PC-3 (cell line): ENCODE measurements at regions of chr1 and their contacts with region 1.

Region 1: GRCh38 chr1:32063261-32063681 is 9.5 kb upstream of the TMEM39B start:
- DNase-seq: peak; percentile 63
- ATAC-seq: peak; percentile 45
- H3K4me3 ChIP-seq: no peak overlapping the region
- H3K27ac ChIP-seq: no peak overlapping the region
- H3K4me1 ChIP-seq: peaks cover 18% of the 10 kb centered on the region
- H3K27me3 ChIP-seq: no peaks in the 10 kb centered on the region
- CTCF ChIP-seq: peak; percentile 67

Region 2: GRCh38 chr1:31955917-31956736 is 107.1 kb before region 1 on chr1:
- CTCF ChIA-PET with region 1: no interaction called
- POLR2A ChIA-PET with region 1: no interaction called
- intact Hi-C with region 1: loop called (anchors 5 kb)
- DNase-seq: peak; percentile 98
- ATAC-seq: peak; percentile 90
- H3K4me3 ChIP-seq: no peak overlapping the region
- H3K27ac ChIP-seq: peak overlapping the region; percentile 99
- H3K4me1 ChIP-seq: peaks cover 25% of the 10 kb centered on the region
- H3K27me3 ChIP-seq: no peaks in the 10 kb centered on the region
- CTCF ChIP-seq: peak; percentile 48

Region 3: DNA sequence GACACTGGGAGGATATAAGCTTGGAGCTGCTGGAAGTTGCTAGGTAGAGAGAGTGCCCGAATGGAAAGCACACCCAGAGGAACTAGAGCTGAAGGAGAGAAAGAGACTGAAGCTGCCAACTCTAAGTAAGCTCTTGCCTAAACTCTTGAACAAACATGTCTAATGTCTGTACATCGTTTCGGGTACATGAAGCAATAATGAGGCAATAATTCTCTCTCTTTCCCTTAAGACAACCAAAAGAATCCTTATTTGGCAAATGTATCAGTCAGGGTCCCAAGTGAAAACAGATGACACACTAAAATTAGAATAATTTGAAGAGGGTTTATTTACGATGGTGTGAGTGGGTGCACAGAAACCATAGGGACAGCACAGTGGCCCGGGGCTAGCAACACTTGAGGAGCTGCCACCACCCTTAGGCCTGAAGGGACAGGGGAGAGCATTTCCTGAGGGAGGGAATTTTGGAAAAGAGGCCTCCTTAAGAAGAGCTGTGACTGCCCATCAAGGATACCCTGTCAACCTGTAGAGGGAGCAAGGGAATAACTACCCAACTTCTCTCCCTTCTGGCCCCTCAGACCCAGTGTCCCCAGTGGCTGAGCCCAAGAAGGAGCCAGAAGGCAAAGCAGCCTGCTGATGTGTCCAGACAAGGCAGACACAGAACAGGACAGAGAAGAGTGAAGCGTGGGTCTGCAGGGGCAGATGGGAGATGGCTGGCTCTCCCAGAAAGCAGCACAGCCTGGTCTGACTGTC is 85.7 kb before region 1 on chr1:
- CTCF ChIA-PET with region 1: interaction called, 3 read pairs
- POLR2A ChIA-PET with region 1: interaction called, 10 read pairs
- intact Hi-C with region 1: loop called (anchors 1 kb)
- DNase-seq: peak; percentile 58
- ATAC-seq: peak; percentile 80
- H3K4me3 ChIP-seq: no peak overlapping the region
- H3K27ac ChIP-seq: no peak overlapping the region
- H3K4me1 ChIP-seq: peaks cover 6% of the 10 kb centered on the region
- H3K27me3 ChIP-seq: no peaks in the 10 kb centered on the region
- CTCF ChIP-seq: peak; percentile 54

Region 4: DNA sequence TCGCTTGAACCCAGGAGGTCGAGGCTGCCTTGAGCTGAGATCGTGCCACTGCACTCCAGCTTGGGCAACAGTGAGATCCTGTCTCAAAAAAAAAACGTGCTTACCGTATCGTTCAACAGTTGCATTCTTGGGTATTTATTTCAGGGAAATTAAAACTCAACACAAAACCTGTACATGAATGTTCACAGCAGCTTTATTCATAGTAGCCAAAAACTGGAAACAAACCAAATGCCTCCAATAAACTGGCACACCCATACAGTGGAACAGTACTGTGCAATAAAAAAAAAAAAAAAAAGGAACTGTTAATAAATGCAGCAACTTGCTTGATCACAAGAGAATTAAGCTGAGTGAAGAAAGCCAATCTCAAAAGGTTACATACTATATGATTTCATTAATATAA is 42.9 kb before region 1 on chr1:
- CTCF ChIA-PET with region 1: no interaction called
- POLR2A ChIA-PET with region 1: interaction called, 12 read pairs
- intact Hi-C with region 1: no loop called
- DNase-seq: no peak
- ATAC-seq: peak; percentile 55
- H3K4me3 ChIP-seq: no peak overlapping the region
- H3K27ac ChIP-seq: no peak overlapping the region
- H3K4me1 ChIP-seq: peaks cover 7% of the 10 kb centered on the region; the same call in 1 of the 2 replicates
- H3K27me3 ChIP-seq: no peaks in the 10 kb centered on the region
- CTCF ChIP-seq: no peak

Region 5: DNA sequence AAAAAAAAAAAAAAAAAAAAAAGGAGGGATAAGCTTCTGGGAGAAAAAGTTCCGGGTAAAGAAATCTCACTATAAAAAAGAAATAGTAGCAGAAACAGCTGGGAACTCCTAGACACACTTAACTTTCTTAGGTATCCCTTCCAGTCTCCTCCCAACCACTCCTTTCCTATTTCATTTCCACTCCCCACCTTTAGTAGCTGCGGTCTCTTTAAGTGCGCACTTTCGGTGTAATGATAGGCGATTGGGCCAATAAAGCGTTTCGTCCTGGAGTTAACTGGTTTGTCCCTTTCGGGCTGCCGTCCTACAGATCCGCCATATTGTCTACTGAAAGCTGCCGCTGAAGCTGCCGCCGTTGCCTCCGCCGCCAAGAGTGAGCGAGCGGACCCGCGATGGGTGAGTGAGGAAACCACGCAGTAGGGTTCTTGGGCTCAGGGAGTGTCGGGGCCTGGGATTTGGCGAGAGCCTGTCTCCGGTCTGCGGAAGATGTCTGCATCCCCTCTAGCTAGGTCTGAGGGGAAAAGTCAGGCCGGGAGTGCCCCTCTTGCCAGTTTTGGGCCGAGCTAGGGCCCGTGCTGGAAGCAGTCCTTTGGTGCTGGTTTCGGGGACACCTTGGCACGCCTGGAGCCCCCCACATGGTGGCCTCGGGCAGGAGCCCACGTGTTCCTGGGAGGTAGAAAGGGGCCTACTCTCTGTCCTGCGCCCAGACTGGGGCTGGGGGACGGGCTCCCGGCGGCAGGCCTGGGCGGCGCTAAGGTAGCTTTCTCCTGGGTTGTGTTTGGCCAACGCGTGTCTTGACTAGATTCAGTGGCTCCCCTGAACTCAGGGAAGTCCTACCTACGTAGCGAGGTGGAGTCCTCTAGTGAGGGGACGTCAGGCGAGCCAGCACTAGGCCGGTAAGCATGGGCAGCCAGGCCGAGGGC is 44.7 kb after region 1 on chr1 and contains the start of gene KPNA6:
- CTCF ChIA-PET with region 1: interaction called, 4 read pairs
- POLR2A ChIA-PET with region 1: no interaction called
- intact Hi-C with region 1: loop called (anchors 2 kb)
- DNase-seq: peak; percentile 95
- ATAC-seq: peak; percentile 82
- H3K4me3 ChIP-seq: peak within 1 kb of the TSS; percentile 97
- H3K27ac ChIP-seq: peak within 1 kb of the TSS; percentile 73
- H3K4me1 ChIP-seq: peaks cover 7% of the 10 kb centered on the region; the same call in 1 of the 2 replicates
- H3K27me3 ChIP-seq: no peaks in the 10 kb centered on the region
- CTCF ChIP-seq: no peak
- total RNA-seq, gene KPNA6: 45.7 and 45.8 TPM in 2 replicates

Region 6: GRCh38 chr1:32142446-32143301 is 79.4 kb after region 1 on chr1:
- CTCF ChIA-PET with region 1: interaction called, 21 read pairs
- POLR2A ChIA-PET with region 1: no interaction called
- intact Hi-C with region 1: no loop called
- DNase-seq: peak; percentile 82
- ATAC-seq: peak; percentile 83
- H3K4me3 ChIP-seq: no peak overlapping the region
- H3K27ac ChIP-seq: peak overlapping the region; percentile 34
- H3K4me1 ChIP-seq: peaks cover 35% of the 10 kb centered on the region
- H3K27me3 ChIP-seq: no peaks in the 10 kb centered on the region
- CTCF ChIP-seq: no peak